ENCODE measurements at regions of chr1 and their contacts with region 1.

Region 1: DNA sequence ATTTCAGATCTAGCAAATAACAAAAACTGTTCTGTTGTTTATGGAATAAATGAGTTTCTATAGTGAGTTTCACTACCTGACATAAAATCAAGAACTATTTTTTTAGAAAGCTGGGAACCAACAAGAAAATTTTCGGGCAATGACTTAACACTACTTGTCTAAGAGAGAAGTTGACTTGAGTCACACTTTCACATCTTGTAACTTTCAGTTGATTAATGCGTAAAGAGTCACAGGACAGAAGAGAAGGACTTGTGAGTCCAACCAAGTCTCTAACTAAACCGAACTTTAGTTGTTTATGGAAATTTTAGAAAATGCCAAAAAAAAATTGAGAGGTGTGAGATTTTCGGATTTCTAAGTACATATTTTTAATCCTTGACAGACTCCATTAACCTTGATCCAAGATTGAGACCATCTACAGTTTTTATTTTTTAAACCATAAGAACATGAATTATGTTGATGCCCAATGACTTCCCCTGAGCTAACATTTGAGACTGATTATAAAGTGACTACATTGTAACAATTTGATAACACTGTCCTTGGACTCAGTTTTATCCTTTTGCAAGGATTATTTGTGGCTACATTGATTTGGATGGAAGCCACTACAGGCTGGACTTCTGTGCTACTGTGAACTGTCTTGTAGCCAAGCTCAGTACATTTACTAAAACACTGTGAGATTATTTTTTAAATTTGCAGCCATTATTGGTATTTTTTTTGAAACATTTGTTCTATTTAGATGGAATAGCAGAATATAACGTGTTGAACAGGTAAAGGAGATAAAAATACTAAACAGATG is 284.0 kb downstream of the PTPRC start:
- DNase-seq: no peak
- H3K4me3 Mint-ChIP-seq: peak overlapping the region; percentile 55
- H3K27ac Mint-ChIP-seq: peak overlapping the region; percentile 71
- H3K4me1 Mint-ChIP-seq: peaks cover 73% of the 10 kb centered on the region
- H3K27me3 Mint-ChIP-seq: no peaks in the 10 kb centered on the region

Region 2: GRCh38 chr1:198734323-198735008 is 188.4 kb before region 1 on chr1:
- intact Hi-C with region 1: loop called (anchors 5 kb)
- DNase-seq: no peak
- H3K4me3 Mint-ChIP-seq: no peak overlapping the region
- H3K27ac Mint-ChIP-seq: peak overlapping the region; percentile 73
- H3K4me1 Mint-ChIP-seq: peaks cover 62% of the 10 kb centered on the region
- H3K27me3 Mint-ChIP-seq: no peaks in the 10 kb centered on the region

Region 3: GRCh38 chr1:198880818-198881597 is 41.8 kb before region 1 on chr1:
- intact Hi-C with region 1: loop called (anchors 1 kb)
- DNase-seq: no peak
- H3K4me3 Mint-ChIP-seq: no peak overlapping the region
- H3K27ac Mint-ChIP-seq: peak overlapping the region; percentile 49
- H3K4me1 Mint-ChIP-seq: peaks cover 42% of the 10 kb centered on the region
- H3K27me3 Mint-ChIP-seq: no peaks in the 10 kb centered on the region

Region 4: GRCh38 chr1:198907423-198907746 is 15.4 kb before region 1 on chr1:
- intact Hi-C with region 1: loop called (anchors 1 kb)
- DNase-seq: no peak
- H3K4me3 Mint-ChIP-seq: peak overlapping the region; percentile 40
- H3K27ac Mint-ChIP-seq: peak overlapping the region; percentile 39
- H3K4me1 Mint-ChIP-seq: peaks cover 58% of the 10 kb centered on the region
- H3K27me3 Mint-ChIP-seq: no peaks in the 10 kb centered on the region

Region 5: DNA sequence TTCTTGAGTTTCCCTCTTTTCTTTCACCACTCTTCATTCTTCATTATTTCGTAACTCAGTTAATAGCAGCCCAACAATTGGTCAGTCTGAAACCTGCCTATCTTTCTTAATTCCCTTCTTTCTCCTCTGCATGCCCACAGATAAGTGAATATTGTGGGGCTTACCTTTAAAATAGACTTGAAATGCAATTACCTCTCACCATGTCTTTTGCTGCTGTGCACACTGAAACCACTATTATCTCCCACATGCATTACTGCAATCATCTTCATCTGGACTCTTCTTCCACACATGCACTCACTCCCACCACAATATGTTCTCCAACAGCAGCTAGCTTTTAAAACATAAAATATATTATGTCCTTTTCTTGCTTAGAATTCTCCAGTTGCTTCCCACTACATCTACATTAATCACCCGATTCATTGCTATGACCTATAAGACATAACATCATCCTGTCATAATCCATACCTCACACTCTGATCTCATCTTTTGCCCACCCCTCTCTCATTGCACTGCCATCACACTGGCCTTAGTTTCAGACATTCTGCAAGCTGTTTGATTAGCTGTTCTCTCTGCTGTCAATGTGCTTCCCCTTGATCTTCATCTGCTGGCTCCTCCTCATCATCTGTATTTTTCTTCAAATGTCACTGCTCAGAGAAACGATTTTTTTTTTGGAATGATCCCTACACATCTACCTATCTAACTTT is 20.8 kb after region 1 on chr1:
- intact Hi-C with region 1: no loop called
- DNase-seq: no peak
- H3K4me3 Mint-ChIP-seq: no peak overlapping the region
- H3K27ac Mint-ChIP-seq: no peak overlapping the region
- H3K4me1 Mint-ChIP-seq: peaks cover 7% of the 10 kb centered on the region
- H3K27me3 Mint-ChIP-seq: no peaks in the 10 kb centered on the region

Region 6: DNA sequence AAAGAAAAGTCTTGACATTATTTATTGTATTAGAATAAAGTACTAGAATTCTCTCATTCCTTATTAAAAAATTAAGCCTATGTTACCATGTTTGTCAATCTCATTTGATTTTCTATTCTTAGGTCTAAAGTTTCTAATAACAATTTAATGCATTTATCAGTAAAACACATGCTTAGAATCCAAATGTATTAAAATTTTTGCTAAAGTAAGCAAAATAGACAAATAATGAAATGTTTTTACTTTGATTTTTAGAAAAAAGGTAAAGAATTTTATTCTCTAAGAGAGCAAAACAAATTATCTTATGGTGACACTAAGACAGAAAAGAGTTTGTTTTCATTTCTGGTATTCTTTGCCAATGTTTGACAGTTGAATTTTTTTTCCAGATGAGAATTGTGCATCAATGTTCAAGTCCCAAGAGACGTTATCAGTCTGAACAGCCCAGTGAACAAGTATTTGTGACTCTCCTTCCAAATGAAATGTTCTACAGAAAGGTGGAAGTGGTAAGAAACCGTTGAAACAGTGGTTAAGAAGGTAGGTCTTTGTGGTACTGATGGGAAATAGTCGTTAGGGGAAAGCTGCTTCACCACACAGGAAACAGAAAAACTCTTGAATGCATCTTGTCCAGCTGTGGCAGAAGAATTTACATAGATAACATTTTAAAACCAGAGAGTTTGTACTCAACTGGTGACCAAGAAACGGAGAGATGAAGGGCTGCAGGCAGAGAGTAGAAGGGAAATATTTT is 118.5 kb after region 1 on chr1:
- intact Hi-C with region 1: loop called (anchors 1 kb)
- DNase-seq: peak; percentile 57
- H3K4me3 Mint-ChIP-seq: peak overlapping the region; percentile 51
- H3K27ac Mint-ChIP-seq: peak overlapping the region; percentile 71
- H3K4me1 Mint-ChIP-seq: peaks cover 44% of the 10 kb centered on the region
- H3K27me3 Mint-ChIP-seq: no peaks in the 10 kb centered on the region

Region 7: DNA sequence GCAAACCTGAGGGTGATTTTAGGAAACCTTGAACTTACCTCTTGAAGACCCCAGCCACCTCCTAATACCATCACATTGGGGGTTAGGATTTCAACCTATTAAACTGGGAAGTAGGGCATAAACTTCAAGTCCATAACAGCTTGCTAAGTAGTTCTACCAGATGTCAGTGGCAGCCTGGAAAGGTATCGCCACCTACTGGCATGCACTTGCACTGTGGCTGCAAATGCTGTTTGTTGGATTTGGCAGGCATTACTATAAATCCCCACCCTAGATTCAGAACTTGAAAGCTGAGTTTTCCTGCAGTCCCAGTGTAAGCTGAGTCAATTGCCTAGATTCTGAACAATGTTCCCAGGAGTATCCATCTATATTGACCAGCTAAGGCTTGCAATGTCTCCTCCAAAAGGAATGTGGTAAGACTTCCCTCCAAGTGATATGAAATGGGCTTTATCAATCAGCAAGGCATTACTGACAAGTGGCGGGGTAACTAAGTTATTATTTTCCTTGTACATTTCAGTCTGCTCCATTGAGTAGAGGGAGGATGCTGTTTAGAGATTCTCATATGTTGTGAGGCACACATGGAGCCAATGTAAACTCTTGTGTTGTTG is 190.5 kb after region 1 on chr1:
- intact Hi-C with region 1: loop called (anchors 5 kb)
- DNase-seq: peak; percentile 49
- H3K4me3 Mint-ChIP-seq: no peak overlapping the region
- H3K27ac Mint-ChIP-seq: no peak overlapping the region
- H3K4me1 Mint-ChIP-seq: peaks cover 11% of the 10 kb centered on the region
- H3K27me3 Mint-ChIP-seq: no peaks in the 10 kb centered on the region

Measured in activated T-helper 2 cell treated with anti-CD3 and anti-CD28 coated beads, Interferon-gamma antibody, Interleukin-2, Interleukin-4, amounts not matched to agents 10 μg/mL and 5 μg/mL and 100 μg/mL, durations not matched to agents 14 hours and 24 hours and 36 hours (primary cell).